T-cell (primary cell): ENCODE measurements at regions of chr7 and their contacts with region 1.

Region 1: DNA sequence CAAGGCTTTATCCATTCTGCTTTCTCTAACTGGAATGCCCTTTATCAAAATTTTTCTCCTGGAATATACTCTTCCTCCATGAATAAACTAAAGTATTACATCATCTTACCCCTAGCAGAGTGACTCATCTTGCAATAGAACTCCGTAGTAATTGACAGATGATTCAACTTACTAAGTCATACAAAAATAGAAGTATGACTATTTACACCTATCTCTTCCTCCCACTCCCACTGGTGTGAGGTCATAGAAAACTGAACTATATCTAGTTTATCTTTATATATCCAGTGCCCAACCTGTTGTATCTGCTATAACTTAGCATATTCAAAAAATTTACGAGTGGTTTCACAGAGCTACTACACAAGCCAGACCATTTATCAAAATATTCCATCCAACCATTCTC is 26.1 kb downstream of the ABCB1 start:
- DNase-seq: no peak
- ATAC-seq: no peak
- H3K4me3 ChIP-seq: no peak overlapping the region
- H3K4me3 Mint-ChIP-seq: no peak overlapping the region
- H3K27ac ChIP-seq: no peak overlapping the region
- H3K27ac Mint-ChIP-seq: no peak overlapping the region
- H3K4me1 ChIP-seq: no peaks in the 10 kb centered on the region
- H3K4me1 Mint-ChIP-seq: peaks cover 2 to 14% (median 6%) of the 10 kb centered on the region in 3 donors
- H3K27me3 ChIP-seq: no peaks in the 10 kb centered on the region
- H3K27me3 Mint-ChIP-seq: peaks cover 0 to 3% of the 10 kb centered on the region in 2 donors

Region 2: DNA sequence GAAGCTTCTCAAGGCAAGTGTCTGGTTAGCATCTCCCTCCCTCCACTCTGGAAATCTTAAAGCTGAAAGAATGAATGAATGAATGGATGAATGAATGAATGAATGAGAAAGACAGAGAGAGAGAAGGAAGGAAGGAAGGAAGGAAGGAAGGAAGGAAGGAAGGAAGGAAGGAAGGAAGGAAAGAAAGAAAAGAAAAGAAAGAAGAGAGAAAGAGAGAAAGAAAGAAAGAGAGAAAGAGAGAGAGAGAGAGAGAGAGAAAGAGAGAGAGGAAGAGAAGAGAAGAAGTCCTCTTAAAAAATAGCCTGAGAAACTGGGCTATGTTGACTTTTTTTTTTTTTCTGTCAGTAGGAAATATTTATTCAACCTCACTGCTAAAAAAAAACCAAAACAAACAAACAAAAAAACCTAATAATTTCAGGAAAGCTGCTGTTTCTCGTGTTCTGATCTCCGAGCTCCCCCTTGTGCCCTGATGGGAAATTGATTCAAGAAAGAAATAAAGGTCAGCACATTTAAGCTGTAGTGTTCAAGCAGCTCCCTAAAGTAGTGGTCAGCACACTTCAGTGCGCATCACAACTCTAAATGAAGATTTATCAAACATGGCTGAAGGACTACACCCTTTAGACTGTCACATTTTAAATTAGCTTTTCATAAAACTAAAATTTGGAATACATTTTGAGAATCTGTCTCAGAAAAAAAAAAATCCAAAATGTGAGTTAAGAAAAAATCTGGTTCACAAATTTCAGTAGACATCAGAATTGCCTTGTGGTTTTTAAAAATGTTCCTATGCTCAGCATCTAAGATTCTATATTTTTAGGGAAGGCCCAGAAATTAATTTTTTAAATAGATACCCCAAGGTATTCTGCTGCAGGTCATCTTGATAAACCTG is 669.4 kb before region 1 on chr7:
- CTCF ChIA-PET with region 1: interaction called in 1 of 2 experiments, 11 read pairs
- POLR2A ChIA-PET with region 1: no interaction called
- DNase-seq: peak in 1 of 35 experiments; percentile 5
- ATAC-seq: no peak
- H3K4me3 ChIP-seq: no peak overlapping the region
- H3K4me3 Mint-ChIP-seq: no peak overlapping the region
- H3K27ac ChIP-seq: no peak overlapping the region
- H3K27ac Mint-ChIP-seq: no peak overlapping the region
- H3K4me1 ChIP-seq: no peaks in the 10 kb centered on the region
- H3K4me1 Mint-ChIP-seq: no peaks in the 10 kb centered on the region
- H3K27me3 ChIP-seq: no peaks in the 10 kb centered on the region
- H3K27me3 Mint-ChIP-seq: peaks cover 0 to 6% of the 10 kb centered on the region in 2 donors